GM18951 (cell line): ENCODE measurements at regions of chr6 and their contacts with region 1.

Region 1: DNA sequence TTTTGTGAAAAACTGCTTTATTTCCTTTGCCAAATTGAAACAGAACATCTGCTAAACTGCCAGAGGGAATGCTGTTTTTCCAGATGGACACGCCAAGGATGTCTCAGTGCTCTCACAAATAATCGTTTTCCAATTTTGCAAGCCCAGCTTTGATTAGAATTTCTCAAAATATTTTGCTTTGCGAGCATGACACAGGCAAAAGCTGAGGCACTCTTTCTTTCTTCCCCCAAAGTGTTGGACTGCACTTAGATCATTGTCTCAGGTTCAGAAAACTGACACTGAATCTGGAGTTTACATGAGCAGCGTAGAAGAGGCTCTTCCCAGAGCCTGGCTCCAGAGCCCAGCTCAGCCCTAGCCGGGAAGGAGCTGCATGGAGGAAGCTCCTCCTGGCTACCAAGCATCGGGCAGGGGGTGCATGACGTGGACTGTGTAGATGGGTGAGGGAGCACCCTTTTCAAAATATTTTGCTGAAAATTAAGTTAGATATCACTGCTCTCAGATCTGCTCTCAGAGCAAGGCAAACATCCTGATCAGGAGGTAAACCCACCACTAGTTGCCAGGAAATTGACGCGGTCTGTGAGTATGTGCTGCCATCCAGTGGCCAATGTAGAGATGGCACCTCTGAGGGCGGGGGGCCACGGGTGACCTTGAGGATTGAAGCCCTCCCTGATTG is 107.5 kb downstream of the SLC22A3 start:
- POLR2A ChIP-seq: no peak

Region 2: DNA sequence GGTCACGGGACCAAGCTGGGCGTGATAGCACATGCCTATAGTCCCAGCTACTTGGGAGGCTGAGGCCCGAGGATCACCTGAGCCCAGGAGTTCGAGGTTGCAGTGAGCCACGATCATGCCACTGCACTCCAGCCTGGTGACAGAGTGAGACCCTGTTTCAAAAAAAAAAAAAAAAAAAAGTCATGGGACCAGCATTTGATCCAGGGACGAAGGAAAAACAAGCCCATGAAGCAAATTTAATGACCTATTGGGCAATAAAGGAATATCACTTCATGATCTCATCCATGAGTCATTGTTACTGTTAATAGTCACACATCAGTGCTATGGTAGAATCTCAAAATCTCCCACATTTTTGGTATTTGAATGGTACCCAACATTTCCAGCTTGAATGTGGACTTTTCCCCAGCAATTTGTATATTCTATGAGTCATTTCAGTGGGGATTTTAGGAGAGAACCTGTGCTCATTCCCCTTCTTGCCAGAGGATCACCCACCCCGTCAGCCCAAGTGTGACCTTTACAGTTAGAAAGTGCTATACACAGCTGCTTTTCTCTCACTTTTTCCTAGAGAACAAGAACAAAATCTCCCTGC is 754.2 kb before region 1 on chr6:
- in situ Hi-C with region 1: loop called (anchors 10 kb)
- POLR2A ChIP-seq: no peak

Region 3: DNA sequence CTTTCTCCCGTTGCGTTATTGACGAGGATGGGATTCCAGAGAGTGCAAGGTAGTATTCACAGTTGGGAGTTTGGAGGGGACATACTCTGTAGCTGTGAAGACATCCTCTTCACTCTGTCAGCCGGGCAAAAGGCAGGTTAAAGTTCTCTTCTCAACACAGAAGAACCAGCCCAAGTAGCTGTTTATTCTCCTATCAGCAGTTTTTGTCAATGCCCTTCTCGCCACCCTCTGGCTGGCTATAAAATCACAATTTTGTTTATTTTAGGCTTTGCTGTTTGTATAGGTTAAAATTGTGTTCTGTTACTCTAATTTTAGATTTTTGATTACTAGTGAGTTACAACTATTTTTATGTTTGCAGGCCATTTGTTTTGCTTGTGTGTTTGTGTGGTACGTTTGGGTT is 602.8 kb before region 1 on chr6:
- in situ Hi-C with region 1: loop called (anchors 25 kb)
- POLR2A ChIP-seq: no peak

Region 4: DNA sequence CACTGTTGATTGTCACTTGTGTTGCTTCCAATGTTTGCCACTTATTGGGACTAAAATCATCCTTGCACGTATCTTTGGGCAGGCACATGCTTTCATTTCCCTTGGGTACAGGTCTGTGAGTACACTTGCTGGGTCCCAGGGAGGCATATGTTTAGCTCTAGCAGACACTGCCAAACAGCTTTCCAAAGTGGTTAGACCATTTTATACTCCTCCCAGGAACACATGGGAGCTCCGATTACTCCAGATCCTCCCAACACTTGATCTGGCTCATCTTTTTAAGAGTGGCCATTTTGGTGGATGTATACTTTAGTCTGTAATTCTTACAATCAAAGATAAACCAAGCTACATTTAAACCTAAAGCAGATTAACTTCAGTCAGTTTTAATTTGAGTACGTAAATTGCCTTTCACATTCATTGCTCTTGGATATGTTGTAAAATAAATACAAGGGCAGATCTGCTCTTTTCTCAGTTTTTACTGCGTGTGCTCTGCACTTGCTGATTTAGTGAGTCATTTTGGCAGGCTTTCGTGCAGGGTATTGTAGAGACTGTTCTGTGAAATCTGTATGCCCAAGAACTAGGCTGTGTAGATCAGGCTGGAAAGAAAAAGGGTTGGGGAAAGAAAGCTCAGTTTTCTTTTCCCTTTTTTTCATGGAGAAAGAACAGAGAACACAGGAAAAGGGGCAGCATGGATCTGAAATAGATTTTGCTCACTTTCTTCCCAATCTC is 314.5 kb before region 1 on chr6:
- in situ Hi-C with region 1: loop called (anchors 10 kb)
- POLR2A ChIP-seq: no peak

Region 5: DNA sequence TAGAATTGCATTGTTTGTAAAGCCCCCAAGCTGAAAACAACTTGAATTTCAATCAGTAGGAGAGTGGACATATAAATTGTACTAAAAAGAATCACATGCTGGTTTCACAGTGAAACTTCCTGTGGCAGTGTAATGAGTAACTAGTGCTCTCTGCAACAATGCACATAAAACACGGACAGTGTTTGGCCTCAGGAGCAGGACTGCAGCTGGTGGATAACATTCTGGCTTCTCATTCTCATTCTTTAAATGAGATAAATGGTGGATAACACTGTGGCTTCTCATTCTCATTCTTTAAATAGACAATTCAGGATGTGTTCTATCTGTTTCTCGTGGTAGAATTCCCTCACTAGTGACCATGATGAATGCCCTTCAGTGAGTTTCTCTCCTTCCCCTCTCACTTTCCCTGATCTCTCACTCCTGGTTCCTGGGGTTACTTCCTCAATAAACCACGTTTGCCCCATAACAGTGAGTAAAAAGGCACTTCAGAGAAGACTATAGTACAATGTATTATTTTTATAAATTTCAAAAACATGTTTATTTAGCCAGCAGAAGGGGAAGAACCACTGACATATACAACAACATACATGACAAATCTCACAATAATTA is 257.0 kb before region 1 on chr6:
- in situ Hi-C with region 1: no loop called
- POLR2A ChIP-seq: no peak

Region 6: GRCh38 chr6:160510199-160510598 is 54.5 kb after region 1 on chr6:
- in situ Hi-C with region 1: no loop called
- POLR2A ChIP-seq: no peak